Common myeloid progenitor, CD34-positive (primary cell): ENCODE measurements at regions of chr18 and their contacts with region 1.

Region 1: DNA sequence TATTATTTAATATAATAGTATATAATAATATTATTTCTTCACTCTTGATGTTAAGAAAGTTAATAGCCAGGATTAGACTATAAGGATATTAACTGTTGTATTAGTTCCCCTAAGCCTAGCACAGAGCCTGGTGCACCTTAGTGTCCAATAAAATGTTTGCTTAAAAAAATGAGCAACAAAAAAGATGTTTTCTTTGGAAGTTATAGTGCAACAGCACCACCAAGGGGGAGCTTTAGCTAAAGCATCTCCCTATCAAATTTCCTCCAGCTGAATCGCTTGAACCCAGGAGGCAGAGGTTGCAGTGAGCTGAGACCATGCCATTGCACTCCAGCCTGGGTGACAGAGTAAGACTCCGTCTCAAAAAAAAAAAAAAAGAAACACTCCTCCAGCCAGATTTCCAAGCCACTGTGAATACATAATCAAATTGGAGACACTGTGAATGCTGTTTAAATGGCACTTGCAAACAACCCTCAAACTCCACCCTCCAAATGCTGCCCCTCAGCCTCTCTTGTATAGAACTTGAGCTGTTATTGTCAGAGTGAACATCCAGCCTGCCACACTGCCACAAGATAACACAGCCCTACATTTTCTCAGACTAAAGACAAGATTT is 221.9 kb downstream of the DYM start:
- DNase-seq: peak; percentile 39 to 61 (median 59)
- H3K4me3 ChIP-seq: no peak overlapping the region
- H3K27ac ChIP-seq: no peak overlapping the region
- H3K4me1 ChIP-seq: no peaks in the 10 kb centered on the region
- H3K27me3 ChIP-seq: no peaks in the 10 kb centered on the region

Region 2: GRCh38 chr18:48675352-48675761 is 563.2 kb before region 1 on chr18:
- CTCF ChIA-PET with region 1: interaction called, 35 read pairs
- POLR2A ChIA-PET with region 1: no interaction called
- DNase-seq: peak; percentile 74 to 86 (median 81)
- H3K4me3 ChIP-seq: no peak overlapping the region
- H3K27ac ChIP-seq: no peak overlapping the region
- H3K4me1 ChIP-seq: peaks cover 2 to 51% (median 18%) of the 10 kb centered on the region in 4 experiments
- H3K27me3 ChIP-seq: no peaks in the 10 kb centered on the region

Region 3: DNA sequence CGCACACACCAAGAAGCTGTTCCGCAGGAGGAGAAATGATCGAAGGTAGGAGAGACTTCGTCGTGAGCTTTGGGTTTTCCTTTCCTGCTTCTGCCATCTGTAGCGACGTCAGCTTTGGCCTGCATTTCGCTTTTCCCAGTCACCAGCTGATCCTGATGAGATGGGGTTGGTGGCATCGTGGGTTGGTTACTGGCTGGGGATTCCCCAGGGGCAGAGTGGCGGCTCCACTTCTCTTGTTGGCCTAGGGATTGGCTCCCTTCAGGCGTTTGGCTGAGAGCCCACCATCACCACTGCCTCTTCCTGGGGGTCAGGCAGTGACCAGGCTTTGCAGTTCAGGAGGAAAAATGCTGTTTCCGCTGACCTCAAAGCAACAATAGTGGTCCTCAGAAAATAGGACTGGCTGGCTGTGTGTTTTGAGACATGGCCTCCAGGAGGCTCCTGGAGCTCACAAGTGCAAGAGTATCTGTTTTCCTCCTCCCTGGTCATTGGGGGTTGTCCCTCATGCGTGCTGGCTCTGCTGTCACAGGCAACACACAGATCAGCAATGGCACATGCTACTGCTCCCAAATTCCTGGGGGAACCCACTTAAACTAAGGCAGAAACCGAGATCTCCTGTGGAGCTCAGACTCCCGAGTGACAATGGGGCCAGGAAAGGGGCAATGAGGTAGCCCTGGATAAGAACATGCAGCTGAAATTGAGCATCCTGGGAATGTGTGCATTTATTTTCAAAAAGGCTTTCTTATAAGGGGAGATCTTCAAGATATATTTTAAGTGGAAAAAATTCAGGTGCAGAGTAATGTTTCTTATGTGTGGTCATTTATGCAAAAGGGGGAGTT is 526.7 kb before region 1 on chr18:
- CTCF ChIA-PET with region 1: interaction called, 18 read pairs
- POLR2A ChIA-PET with region 1: no interaction called
- DNase-seq: peak; percentile 27 to 54 (median 51)
- H3K4me3 ChIP-seq: no peak overlapping the region
- H3K27ac ChIP-seq: no peak overlapping the region
- H3K4me1 ChIP-seq: peaks cover 0 to 18% (median 6%) of the 10 kb centered on the region in 4 experiments
- H3K27me3 ChIP-seq: no peaks in the 10 kb centered on the region

Region 4: GRCh38 chr18:48996901-48997463 is 241.6 kb before region 1 on chr18:
- CTCF ChIA-PET with region 1: no interaction called
- POLR2A ChIA-PET with region 1: no interaction called
- DNase-seq: peak in 1 of 3 donors; percentile 60
- H3K4me3 ChIP-seq: no peak overlapping the region
- H3K27ac ChIP-seq: no peak overlapping the region
- H3K4me1 ChIP-seq: peaks cover 0 to 36% (median 17%) of the 10 kb centered on the region in 4 experiments
- H3K27me3 ChIP-seq: no peaks in the 10 kb centered on the region

Region 5: GRCh38 chr18:49285627-49286026 is 47.1 kb after region 1 on chr18:
- CTCF ChIA-PET with region 1: no interaction called
- POLR2A ChIA-PET with region 1: no interaction called
- DNase-seq: no peak
- H3K4me3 ChIP-seq: no peak overlapping the region
- H3K27ac ChIP-seq: no peak overlapping the region
- H3K4me1 ChIP-seq: no peaks in the 10 kb centered on the region
- H3K27me3 ChIP-seq: no peaks in the 10 kb centered on the region